ENCODE measurements at regions of chr6 and their contacts with region 1.

Region 1: DNA sequence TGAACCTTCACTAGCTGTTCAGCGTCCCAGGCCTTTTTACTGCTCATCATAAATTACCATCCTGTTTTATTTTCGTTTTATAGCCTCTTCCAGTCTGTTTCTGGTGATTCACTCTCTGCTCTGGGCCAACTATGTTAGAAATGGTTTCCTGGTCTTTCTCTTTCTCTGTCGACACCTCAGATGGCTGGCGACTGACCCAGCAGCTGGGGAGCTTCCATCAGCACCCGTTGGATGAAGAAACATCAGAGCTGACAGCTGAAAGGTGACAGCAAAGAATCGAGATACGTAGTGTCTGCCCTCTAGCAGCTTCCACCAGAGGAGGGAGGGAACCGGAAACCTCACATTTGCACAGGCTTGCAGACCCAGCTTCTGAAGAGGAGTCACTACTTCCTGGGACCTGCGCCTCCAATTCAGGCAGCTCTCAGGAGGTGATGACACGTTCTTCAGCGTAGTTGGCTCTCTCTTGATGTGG is 82.9 kb upstream of the MLN start:
- DNase-seq: peak in 3 of 9 experiments; percentile 43 to 64 (median 48)
- ATAC-seq: peak; percentile 89
- H3K4me3 ChIP-seq: no peak overlapping the region
- H3K4me3 Mint-ChIP-seq: no peak overlapping the region
- H3K27ac ChIP-seq: no peak overlapping the region
- H3K27ac Mint-ChIP-seq: peak overlapping the region; percentile 46
- H3K4me1 ChIP-seq: no peaks in the 10 kb centered on the region
- H3K4me1 Mint-ChIP-seq: peaks cover 8% of the 10 kb centered on the region
- H3K27me3 ChIP-seq: no peaks in the 10 kb centered on the region
- H3K27me3 Mint-ChIP-seq: no peaks in the 10 kb centered on the region
- CTCF ChIP-seq: no peak

Region 2: GRCh38 chr6:33926451-33926850 is 39.7 kb after region 1 on chr6:
- CTCF ChIA-PET with region 1: no interaction called
- POLR2A ChIA-PET with region 1: no interaction called
- intact Hi-C with region 1: loop called in 1 of 2 experiments (anchors 5 kb)
- DNase-seq: no peak
- ATAC-seq: no peak
- H3K4me3 ChIP-seq: no peak overlapping the region
- H3K4me3 Mint-ChIP-seq: no peak overlapping the region
- H3K27ac ChIP-seq: no peak overlapping the region
- H3K27ac Mint-ChIP-seq: no peak overlapping the region
- H3K4me1 ChIP-seq: peaks cover 14% of the 10 kb centered on the region
- H3K4me1 Mint-ChIP-seq: peaks cover 16% of the 10 kb centered on the region
- H3K27me3 ChIP-seq: no peaks in the 10 kb centered on the region
- H3K27me3 Mint-ChIP-seq: no peaks in the 10 kb centered on the region
- CTCF ChIP-seq: no peak

Measured in CD8-positive, alpha-beta T cell (primary cell).